T-cell (primary cell): ENCODE measurements at regions of chr1 and their contacts with region 1.

Region 1: DNA sequence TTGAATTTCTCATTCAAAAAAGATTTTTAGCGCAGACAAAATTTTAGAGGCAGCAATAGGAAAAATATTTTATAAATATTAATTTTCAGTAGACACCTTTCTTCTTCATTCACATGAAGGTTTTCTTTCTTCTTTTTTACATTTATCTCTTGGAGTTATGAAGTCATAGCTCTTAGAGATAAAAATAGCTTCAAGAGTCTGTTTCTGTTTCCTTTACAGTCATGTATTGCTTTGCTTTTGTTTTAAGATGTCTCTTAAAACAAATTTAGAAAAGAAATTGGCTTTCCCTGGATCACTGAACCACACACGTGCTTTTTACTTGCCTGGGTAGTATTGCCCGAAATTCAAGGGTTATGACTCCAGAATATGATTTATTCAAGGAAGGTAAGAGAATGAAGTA is 369.9 kb upstream of the LRRC7 start:
- DNase-seq: no peak
- ATAC-seq: no peak
- H3K4me3 ChIP-seq: no peak overlapping the region
- H3K4me3 Mint-ChIP-seq: no peak overlapping the region
- H3K27ac ChIP-seq: no peak overlapping the region
- H3K27ac Mint-ChIP-seq: no peak overlapping the region
- H3K4me1 ChIP-seq: no peaks in the 10 kb centered on the region
- H3K4me1 Mint-ChIP-seq: no peaks in the 10 kb centered on the region
- H3K27me3 ChIP-seq: no peaks in the 10 kb centered on the region
- H3K27me3 Mint-ChIP-seq: no peaks in the 10 kb centered on the region

Region 2: DNA sequence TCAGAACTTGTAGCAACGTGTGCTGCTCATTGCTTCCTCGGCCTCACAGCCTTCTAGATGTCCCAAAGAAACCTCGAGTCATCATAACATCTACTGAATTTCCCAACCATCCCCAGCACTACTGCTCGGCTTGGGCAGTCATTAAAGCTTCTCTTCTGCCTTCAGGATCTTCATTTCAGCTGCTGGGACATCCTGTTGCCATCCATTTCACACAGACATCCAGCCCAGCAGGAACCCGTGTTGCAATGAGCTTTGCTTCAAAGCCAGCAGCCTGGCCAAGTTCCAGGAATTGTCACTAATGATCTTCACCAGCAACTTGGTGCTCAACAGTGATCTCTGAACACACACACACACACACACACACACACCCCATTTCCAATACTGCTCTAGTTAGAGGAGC is 984.0 kb before region 1 on chr1:
- CTCF ChIA-PET with region 1: no interaction called
- POLR2A ChIA-PET with region 1: interaction called in 1 of 2 experiments, 12 read pairs
- DNase-seq: no peak
- ATAC-seq: no peak
- H3K4me3 ChIP-seq: no peak overlapping the region
- H3K4me3 Mint-ChIP-seq: no peak overlapping the region
- H3K27ac ChIP-seq: no peak overlapping the region
- H3K27ac Mint-ChIP-seq: no peak overlapping the region
- H3K4me1 ChIP-seq: no peaks in the 10 kb centered on the region
- H3K4me1 Mint-ChIP-seq: no peaks in the 10 kb centered on the region
- H3K27me3 ChIP-seq: peaks cover 0 to 3% of the 10 kb centered on the region in 2 experiments
- H3K27me3 Mint-ChIP-seq: peaks cover 3 to 5% of the 10 kb centered on the region in 2 donors

Region 3: GRCh38 chr1:69109277-69109676 is 88.5 kb before region 1 on chr1:
- CTCF ChIA-PET with region 1: no interaction called
- POLR2A ChIA-PET with region 1: no interaction called
- DNase-seq: no peak
- ATAC-seq: no peak
- H3K4me3 ChIP-seq: no peak overlapping the region
- H3K4me3 Mint-ChIP-seq: no peak overlapping the region
- H3K27ac ChIP-seq: no peak overlapping the region
- H3K27ac Mint-ChIP-seq: no peak overlapping the region
- H3K4me1 ChIP-seq: no peaks in the 10 kb centered on the region
- H3K4me1 Mint-ChIP-seq: no peaks in the 10 kb centered on the region
- H3K27me3 ChIP-seq: no peaks in the 10 kb centered on the region
- H3K27me3 Mint-ChIP-seq: no peaks in the 10 kb centered on the region

Region 4: DNA sequence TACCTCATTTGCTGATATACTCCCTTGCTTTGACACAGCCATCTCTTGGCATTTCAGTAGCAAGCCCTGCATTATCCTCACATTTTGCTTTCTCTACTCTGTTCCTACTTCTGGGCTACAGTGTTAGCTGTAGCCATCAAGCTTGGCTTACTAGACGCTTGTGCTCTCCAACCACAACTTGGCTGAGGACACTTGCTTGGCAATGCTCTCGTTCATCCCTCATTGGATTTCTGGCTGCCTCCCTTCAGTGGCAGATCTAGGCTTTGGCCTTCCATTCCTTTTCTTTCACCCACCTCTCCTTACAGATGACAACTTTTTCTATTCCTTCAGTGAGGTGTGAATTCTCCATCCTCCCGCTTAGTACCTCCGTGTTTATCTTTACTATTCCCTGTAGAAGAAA is 58.8 kb before region 1 on chr1:
- CTCF ChIA-PET with region 1: no interaction called
- POLR2A ChIA-PET with region 1: no interaction called
- DNase-seq: no peak
- ATAC-seq: no peak
- H3K4me3 ChIP-seq: no peak overlapping the region
- H3K4me3 Mint-ChIP-seq: no peak overlapping the region
- H3K27ac ChIP-seq: no peak overlapping the region
- H3K27ac Mint-ChIP-seq: no peak overlapping the region
- H3K4me1 ChIP-seq: no peaks in the 10 kb centered on the region
- H3K4me1 Mint-ChIP-seq: no peaks in the 10 kb centered on the region
- H3K27me3 ChIP-seq: no peaks in the 10 kb centered on the region
- H3K27me3 Mint-ChIP-seq: no peaks in the 10 kb centered on the region